ENCODE measurements at regions of chr9 and their contacts with region 1.

Region 1: GRCh38 chr9:34376596-34377403 is at the start of gene MYORG:
- DNase-seq: peak; percentile 99
- H3K4me3 ChIP-seq: peak within 1 kb of the TSS; percentile 89
- H3K4me3 Mint-ChIP-seq: peak within 1 kb of the TSS; percentile 88
- H3K27ac Mint-ChIP-seq: peak within 1 kb of the TSS; percentile 49
- H3K4me1 ChIP-seq: peaks cover 29% of the 10 kb centered on the region
- H3K4me1 Mint-ChIP-seq: peaks cover 26% of the 10 kb centered on the region
- H3K27me3 ChIP-seq: no peaks in the 10 kb centered on the region
- H3K27me3 Mint-ChIP-seq: no peaks in the 10 kb centered on the region
- CTCF ChIP-seq: no peak
- total RNA-seq, gene MYORG: 33.4 and 37.3 TPM in 2 replicates

Region 2: DNA sequence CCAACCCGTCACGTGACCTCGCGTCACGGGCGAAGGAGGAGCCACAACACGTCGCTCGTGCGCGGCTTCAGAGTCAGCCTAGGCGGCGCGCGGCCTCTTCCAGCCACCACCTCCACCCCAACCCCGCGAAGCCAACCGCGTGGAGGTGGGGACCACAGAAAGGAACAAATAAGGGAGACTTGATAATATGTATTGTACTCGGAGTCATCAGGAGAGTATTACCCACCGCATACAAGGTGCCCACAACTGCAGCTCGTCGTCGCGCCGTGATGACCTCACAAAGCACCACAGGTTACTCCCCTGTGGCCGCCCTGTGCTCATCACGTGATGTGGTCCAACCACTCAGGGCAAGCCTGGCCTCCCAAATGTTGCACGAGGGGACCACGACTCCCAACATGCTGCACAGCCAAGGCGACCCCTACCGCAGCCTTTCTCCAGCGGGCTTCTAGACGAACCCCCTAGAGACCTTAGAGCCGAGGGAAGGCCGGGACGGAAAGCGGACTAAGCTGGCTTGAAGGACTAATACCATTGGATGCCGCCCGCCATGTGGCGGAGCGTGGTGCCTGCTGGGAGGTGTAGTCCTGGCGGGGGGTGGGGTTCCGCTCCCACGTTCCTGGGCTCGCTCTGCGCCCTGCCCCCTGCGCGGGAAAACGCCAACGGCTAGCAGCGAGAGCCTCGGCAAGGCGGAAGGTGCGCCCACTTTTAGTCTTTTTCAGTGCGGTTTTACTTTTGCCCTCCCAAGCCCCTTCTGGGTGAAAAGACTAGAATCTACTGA is 327.7 kb before region 1 on chr9:
- CTCF ChIA-PET with region 1: no interaction called
- POLR2A ChIA-PET with region 1: no interaction called
- intact Hi-C with region 1: loop called (anchors 5 kb)
- DNase-seq: peak; percentile 96 to 99
- H3K4me3 ChIP-seq: peak overlapping the region; percentile 99
- H3K4me3 Mint-ChIP-seq: peak overlapping the region; percentile 100
- H3K27ac Mint-ChIP-seq: peak overlapping the region; percentile 100
- H3K4me1 ChIP-seq: peaks cover 18% of the 10 kb centered on the region
- H3K4me1 Mint-ChIP-seq: peaks cover 17% of the 10 kb centered on the region
- H3K27me3 ChIP-seq: no peaks in the 10 kb centered on the region
- H3K27me3 Mint-ChIP-seq: no peaks in the 10 kb centered on the region
- CTCF ChIP-seq: no peak

Region 3: DNA sequence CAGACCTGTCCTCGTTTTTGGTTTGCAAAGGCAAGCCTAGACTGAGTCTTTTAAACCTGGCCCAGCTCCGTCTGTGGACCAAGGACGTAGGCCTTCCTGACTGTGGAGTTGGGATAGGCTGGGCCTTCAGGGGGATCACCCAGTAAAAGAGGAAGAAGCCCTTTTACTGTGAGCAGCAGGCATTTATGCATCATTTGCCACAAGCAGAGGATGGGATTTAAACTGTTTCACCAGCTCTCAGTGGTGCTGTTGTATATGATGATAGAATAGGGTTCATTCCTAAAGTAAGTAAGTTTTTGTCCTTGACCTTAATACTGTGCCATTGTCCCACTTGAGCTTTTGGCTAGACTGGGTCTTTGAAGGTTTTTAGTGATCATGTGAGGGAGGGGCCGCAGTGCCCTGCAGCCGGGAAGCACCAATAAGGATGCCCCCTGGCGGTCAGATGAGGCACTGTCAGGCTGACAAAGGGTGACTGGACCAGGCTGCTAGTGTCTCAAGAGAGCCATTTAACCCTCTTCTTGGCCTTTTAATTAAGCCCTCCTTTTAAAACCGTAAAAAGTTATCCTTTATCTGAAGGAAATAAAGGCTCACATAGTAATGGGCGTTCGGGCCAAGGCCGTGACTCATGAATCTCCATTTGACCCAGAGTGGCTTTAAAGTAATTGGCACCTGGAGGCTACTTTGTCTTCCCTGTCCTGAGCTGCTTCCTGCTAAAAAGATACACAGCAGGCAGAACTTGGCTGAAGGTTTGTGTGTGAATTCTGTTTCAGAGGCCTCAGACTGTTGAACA is 123.9 kb before region 1 on chr9:
- CTCF ChIA-PET with region 1: interaction called, 8 read pairs
- POLR2A ChIA-PET with region 1: no interaction called
- intact Hi-C with region 1: loop called (anchors 2 kb)
- DNase-seq: peak; percentile 70 to 80
- H3K4me3 ChIP-seq: no peak overlapping the region
- H3K4me3 Mint-ChIP-seq: no peak overlapping the region
- H3K27ac Mint-ChIP-seq: no peak overlapping the region
- H3K4me1 ChIP-seq: no peaks in the 10 kb centered on the region
- H3K4me1 Mint-ChIP-seq: no peaks in the 10 kb centered on the region
- H3K27me3 ChIP-seq: no peaks in the 10 kb centered on the region
- H3K27me3 Mint-ChIP-seq: no peaks in the 10 kb centered on the region
- CTCF ChIP-seq: peak; percentile 92 to 93

Region 4: DNA sequence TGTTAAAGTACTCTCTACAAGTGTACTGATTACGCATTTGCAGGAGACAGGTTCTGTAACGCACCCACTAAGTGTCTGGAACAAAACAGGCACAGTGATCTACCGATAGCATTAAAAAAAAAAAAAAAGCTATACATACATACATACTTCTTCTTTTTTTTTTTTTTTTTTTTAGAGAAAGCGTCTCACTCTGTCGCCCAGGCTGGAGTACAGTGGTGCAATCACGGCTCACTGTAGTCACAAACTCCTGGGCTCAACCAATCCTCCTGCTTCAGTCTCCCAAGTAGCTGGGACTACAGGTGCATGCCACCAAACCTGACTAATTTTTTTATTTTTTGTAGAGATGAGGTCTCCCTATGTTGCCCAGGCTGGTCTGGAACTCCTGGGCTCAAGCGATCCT is 55.3 kb before region 1 on chr9:
- CTCF ChIA-PET with region 1: no interaction called
- POLR2A ChIA-PET with region 1: no interaction called
- intact Hi-C with region 1: no loop called
- DNase-seq: no peak
- H3K4me3 ChIP-seq: no peak overlapping the region
- H3K4me3 Mint-ChIP-seq: no peak overlapping the region
- H3K27ac Mint-ChIP-seq: no peak overlapping the region
- H3K4me1 ChIP-seq: no peaks in the 10 kb centered on the region
- H3K4me1 Mint-ChIP-seq: peaks cover 9% of the 10 kb centered on the region
- H3K27me3 ChIP-seq: no peaks in the 10 kb centered on the region
- H3K27me3 Mint-ChIP-seq: no peaks in the 10 kb centered on the region
- CTCF ChIP-seq: no peak

Region 5: DNA sequence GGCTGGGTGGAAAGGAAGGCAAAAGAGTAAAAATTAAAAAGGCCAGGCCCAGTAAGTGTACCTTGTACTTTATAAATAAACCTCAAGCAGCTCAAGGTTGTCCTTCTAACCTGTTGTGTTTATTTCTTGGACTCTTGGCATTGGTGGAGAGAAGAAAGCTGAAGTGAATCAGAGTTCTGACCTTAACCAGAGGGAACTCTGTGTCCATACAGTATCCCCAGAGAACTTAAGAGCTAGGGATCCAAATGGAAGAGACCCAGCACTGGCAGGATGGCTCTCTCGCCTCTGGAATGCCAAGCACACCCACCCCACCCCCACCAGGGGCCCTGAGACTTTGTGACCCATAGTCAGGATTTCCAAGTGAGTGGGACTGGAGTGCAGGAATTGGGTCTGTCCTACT is 33.2 kb before region 1 on chr9:
- CTCF ChIA-PET with region 1: interaction called, 4 read pairs
- POLR2A ChIA-PET with region 1: interaction called, 4 read pairs
- intact Hi-C with region 1: loop called (anchors 2 kb)
- DNase-seq: no peak
- H3K4me3 ChIP-seq: no peak overlapping the region
- H3K4me3 Mint-ChIP-seq: no peak overlapping the region
- H3K27ac Mint-ChIP-seq: no peak overlapping the region
- H3K4me1 ChIP-seq: peaks cover 18% of the 10 kb centered on the region
- H3K4me1 Mint-ChIP-seq: peaks cover 13% of the 10 kb centered on the region
- H3K27me3 ChIP-seq: no peaks in the 10 kb centered on the region
- H3K27me3 Mint-ChIP-seq: no peaks in the 10 kb centered on the region
- CTCF ChIP-seq: no peak

Region 6: GRCh38 chr9:34413231-34413852 is 36.5 kb after region 1 on chr9:
- CTCF ChIA-PET with region 1: no interaction called
- POLR2A ChIA-PET with region 1: no interaction called
- intact Hi-C with region 1: no loop called
- DNase-seq: peak; percentile 58 to 74
- H3K4me3 ChIP-seq: no peak overlapping the region
- H3K4me3 Mint-ChIP-seq: no peak overlapping the region
- H3K27ac Mint-ChIP-seq: no peak overlapping the region
- H3K4me1 ChIP-seq: no peaks in the 10 kb centered on the region
- H3K4me1 Mint-ChIP-seq: no peaks in the 10 kb centered on the region
- H3K27me3 ChIP-seq: no peaks in the 10 kb centered on the region
- H3K27me3 Mint-ChIP-seq: no peaks in the 10 kb centered on the region
- CTCF ChIP-seq: no peak

Region 7: DNA sequence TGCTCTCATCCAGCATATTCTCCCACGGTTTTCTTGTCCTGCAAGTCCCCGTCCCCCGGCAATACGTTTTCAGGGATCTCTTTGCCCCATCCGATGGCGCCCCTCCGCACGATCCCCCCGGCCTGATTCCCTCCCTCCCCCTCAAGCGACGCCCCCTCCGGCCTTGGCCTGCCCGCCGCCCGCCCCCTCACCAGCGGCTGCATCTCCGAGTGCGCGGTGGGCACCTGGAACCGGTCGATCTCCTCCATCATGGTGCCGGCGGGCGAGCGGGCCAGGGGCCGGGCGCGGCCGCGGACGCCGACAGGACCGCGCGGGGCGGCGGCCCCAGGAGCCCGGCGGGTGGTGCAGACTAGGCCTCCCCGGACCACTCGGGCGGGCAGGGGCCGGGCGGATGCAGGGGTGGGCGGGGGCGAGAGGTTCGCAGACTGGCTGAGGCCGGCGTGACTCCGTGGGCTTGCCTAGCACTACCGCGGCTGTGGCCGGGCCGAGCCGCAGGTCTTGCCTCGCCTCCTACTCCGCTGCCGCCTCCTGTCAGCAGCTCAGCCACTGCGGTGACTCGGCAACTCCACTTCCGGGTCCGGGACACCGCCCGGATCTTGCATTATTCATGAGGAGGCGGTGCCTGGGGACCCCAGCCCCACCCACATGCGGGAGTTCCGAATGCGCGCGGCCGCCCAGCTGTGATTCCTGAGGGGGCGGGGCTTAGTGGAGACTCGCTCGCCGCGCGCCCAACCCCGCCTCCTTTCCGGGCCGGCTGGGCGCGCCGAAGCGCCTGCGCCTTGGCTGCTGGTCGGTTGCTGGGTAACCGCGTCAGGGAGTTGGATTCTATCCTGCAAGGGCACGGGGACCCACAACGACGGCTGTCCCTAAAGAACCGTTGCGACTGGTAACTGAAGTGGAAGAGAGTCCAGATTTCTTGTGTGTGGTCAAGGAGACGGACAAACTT is 81.5 kb after region 1 on chr9 and contains the starts of genes DNAI1 and FAM219A:
- CTCF ChIA-PET with region 1: interaction called, 4 read pairs
- POLR2A ChIA-PET with region 1: interaction called, 3 read pairs
- intact Hi-C with region 1: loop called (anchors 2 kb)
- DNase-seq: peak; percentile 98 to 99
- H3K4me3 ChIP-seq: peak within 1 kb of the TSS; percentile 55
- H3K4me3 Mint-ChIP-seq: peak within 1 kb of the TSS; percentile 81
- H3K27ac Mint-ChIP-seq: peak within 1 kb of the TSS; percentile 73
- H3K4me1 ChIP-seq: no peaks in the 10 kb centered on the region; the same call in 1 of the 2 replicates
- H3K4me1 Mint-ChIP-seq: peaks cover 16% of the 10 kb centered on the region
- H3K27me3 ChIP-seq: no peaks in the 10 kb centered on the region
- H3K27me3 Mint-ChIP-seq: no peaks in the 10 kb centered on the region
- CTCF ChIP-seq: no peak
- total RNA-seq, gene DNAI1: 0.52 and 0.67 TPM in 2 replicates
- total RNA-seq, gene FAM219A: 13.4 and 14.7 TPM in 2 replicates

Measured in Caco-2 (cell line).